ENCODE measurements at regions of chr5 and their contacts with region 1.

Region 1: DNA sequence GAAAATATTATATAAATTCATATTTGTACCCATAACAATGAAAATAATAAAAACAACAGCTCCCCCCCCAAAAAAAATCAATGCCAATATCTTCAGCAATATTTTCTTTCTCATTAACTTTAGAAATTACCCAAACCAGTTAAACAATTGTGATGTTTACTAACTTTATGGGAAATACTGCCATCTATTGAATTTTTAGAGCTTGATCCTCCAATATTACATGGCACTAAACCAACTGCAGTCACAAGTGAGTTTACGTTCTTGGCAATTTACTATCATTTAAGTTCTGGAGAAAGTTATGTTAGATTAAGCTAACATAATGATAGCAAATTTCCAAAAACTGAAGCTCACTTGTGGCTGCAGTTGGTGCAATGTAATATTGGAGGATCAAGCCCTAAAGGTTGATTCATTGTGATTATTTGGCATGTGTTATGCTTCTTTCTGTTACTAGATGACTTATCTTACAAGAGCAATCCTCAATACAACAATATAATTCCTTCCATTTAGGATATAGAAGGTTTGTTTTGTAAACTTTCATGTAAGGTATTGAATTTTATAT is 379.5 kb downstream of the CDH18 start:
- DNase-seq: peak; percentile 6
- H3K4me3 ChIP-seq: no peak overlapping the region
- H3K27ac ChIP-seq: no peak overlapping the region
- H3K4me1 ChIP-seq: peaks cover 5% of the 10 kb centered on the region
- H3K27me3 ChIP-seq: no peaks in the 10 kb centered on the region
- CTCF ChIP-seq: peak; percentile 48 to 54

Region 2: GRCh38 chr5:18465833-18466591 is 1142.5 kb before region 1 on chr5:
- CTCF ChIA-PET with region 1: interaction called, 14 read pairs
- dilution Hi-C with region 1: no loop called
- in situ Hi-C with region 1: no loop called
- intact Hi-C with region 1: loop called (anchors 1 kb)
- DNase-seq: peak; percentile 51
- H3K4me3 ChIP-seq: no peak overlapping the region
- H3K27ac ChIP-seq: no peak overlapping the region
- H3K4me1 ChIP-seq: no peaks in the 10 kb centered on the region
- H3K27me3 ChIP-seq: no peaks in the 10 kb centered on the region
- CTCF ChIP-seq: peak; percentile 81 to 87

Region 3: DNA sequence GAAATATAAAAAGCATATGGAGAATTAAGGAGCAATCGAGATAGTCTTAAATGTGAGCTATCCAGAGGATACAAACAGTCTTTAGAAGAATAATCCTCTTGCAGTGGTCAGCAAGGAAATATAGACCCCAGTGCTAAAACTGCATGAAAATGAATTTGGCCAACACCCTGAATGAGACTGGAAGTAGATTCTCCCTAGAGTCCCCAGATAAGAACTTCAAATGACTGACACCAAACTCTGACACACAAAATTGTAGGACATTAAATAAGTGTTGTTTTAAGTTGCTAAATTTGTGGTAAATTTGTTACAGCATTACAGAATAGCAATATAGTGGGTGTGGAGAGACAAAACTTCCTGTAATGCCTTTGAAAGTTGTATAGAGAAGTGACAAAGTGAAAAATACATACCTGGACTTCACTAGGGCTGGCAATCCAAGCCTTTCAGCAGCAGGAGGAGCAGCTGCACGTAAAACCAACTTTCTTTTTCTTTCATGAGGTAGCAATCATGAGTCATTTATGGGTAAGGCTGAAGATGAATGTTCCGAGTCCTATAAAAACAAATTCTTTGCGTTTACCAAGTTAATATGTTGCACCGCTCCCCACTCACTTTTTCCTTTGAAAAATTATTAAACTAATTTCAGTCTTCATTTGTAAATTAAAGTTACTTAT is 836.2 kb before region 1 on chr5:
- CTCF ChIA-PET with region 1: no interaction called
- dilution Hi-C with region 1: no loop called
- in situ Hi-C with region 1: loop called in 1 of 2 experiments (anchors 25 kb)
- intact Hi-C with region 1: loop called (anchors 1 kb)
- DNase-seq: peak; percentile 76
- H3K4me3 ChIP-seq: peak overlapping the region in 2 of 3 experiments; percentile 6 to 42
- H3K27ac ChIP-seq: peak overlapping the region; percentile 71
- H3K4me1 ChIP-seq: peaks cover 3% of the 10 kb centered on the region
- H3K27me3 ChIP-seq: no peaks in the 10 kb centered on the region
- CTCF ChIP-seq: peak; percentile 58 to 81

Region 4: DNA sequence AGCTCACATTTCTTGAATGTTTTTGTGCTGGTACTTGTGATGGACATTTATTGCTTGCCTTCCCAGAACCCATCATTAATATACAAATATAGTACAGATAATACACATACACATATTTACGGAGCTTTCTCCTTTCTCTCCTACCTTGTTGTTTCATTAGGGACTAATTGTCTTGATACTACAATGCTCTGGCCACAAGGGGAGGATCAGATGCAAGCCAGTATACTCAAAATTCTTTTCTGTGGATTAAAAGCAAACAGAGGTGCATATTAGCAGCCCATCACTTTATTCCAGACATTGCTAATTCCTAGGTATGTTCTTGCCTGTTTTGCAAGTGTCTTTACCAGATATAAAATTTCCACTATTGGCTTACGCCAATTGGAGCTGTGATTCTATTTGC is 427.5 kb before region 1 on chr5:
- CTCF ChIA-PET with region 1: no interaction called
- dilution Hi-C with region 1: no loop called
- in situ Hi-C with region 1: no loop called
- intact Hi-C with region 1: loop called (anchors 10 kb)
- DNase-seq: no peak
- H3K4me3 ChIP-seq: no peak overlapping the region
- H3K27ac ChIP-seq: no peak overlapping the region
- H3K4me1 ChIP-seq: no peaks in the 10 kb centered on the region
- H3K27me3 ChIP-seq: no peaks in the 10 kb centered on the region
- CTCF ChIP-seq: peak in 1 of 2 donors; percentile 34

Region 5: GRCh38 chr5:19270153-19270818 is 338.2 kb before region 1 on chr5:
- CTCF ChIA-PET with region 1: no interaction called
- dilution Hi-C with region 1: no loop called
- in situ Hi-C with region 1: no loop called
- intact Hi-C with region 1: no loop called
- DNase-seq: no peak
- H3K4me3 ChIP-seq: no peak overlapping the region
- H3K27ac ChIP-seq: no peak overlapping the region
- H3K4me1 ChIP-seq: no peaks in the 10 kb centered on the region
- H3K27me3 ChIP-seq: no peaks in the 10 kb centered on the region
- CTCF ChIP-seq: no peak

Region 6: DNA sequence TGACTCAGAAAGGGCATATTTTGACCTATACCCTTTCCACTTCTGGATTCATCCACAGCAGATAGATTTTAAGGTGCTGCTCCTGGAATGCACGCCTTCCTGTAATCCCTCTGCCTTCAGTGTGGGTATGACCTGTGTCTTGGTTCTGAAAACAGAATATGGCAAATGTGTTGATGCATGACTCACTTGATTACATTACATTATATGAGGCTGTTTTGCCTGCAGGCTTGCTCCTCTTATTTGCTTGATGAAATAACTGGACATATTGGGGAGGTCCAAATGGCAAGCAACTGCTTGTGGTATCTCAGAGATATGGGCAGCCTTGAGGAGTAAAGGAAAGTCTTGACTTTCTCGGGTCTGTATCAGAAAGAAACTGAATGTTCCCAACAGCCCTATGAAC is 89.1 kb before region 1 on chr5:
- CTCF ChIA-PET with region 1: no interaction called
- dilution Hi-C with region 1: no loop called
- in situ Hi-C with region 1: no loop called
- intact Hi-C with region 1: no loop called
- DNase-seq: peak; percentile 30
- H3K4me3 ChIP-seq: no peak overlapping the region
- H3K27ac ChIP-seq: no peak overlapping the region
- H3K4me1 ChIP-seq: no peaks in the 10 kb centered on the region
- H3K27me3 ChIP-seq: no peaks in the 10 kb centered on the region
- CTCF ChIP-seq: no peak

Region 7: GRCh38 chr5:19531374-19531952 is 77.1 kb before region 1 on chr5:
- CTCF ChIA-PET with region 1: no interaction called
- dilution Hi-C with region 1: no loop called
- in situ Hi-C with region 1: no loop called
- intact Hi-C with region 1: no loop called
- DNase-seq: peak; percentile 95
- H3K4me3 ChIP-seq: peak overlapping the region in 2 of 3 experiments; percentile 16 to 27
- H3K27ac ChIP-seq: peak overlapping the region; percentile 99
- H3K4me1 ChIP-seq: peaks cover 21% of the 10 kb centered on the region
- H3K27me3 ChIP-seq: no peaks in the 10 kb centered on the region
- CTCF ChIP-seq: no peak